Sigmoid colon (tissue), 7 donors: ENCODE measurements at regions of chr5 and their contacts with region 1.

Region 1: DNA sequence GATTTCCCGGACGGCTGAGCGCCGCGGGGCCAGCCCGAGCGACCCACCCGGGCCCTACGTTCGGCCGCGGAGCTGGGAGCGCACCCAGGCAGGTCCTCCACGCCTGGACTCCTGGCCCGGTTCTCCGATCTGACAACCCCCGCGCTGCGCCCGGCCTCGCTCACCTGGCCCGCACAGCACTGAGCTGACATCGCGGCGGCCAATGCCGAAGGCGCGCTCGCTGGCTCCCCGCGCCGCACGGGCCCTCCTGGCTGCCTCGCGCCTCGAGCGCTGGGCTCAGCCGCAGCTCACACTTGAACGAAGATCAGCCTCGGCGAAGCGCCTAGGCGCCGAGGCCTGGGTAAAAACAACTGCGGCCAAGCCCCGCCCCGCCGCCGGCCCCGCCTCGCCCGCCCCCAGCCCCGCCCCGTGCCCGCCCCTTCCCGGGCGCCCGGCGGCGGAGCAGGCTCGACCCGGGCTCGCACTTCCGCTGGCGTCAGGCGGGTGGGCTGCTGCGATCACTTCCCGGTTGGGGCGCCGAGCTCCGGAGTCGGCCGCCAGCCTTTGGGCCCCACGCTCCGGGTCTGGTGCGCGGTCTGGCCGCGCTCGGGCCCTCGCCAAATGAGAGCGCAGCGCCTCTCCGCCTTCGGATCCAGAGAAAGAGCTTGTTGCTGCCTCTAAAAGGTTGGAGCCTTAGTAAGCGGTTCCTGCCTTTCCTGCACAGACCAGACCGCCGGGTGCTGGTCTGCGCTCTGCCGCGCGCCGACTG is at the start of gene SERINC5:
- DNase-seq: peak; percentile 93
- H3K4me3 ChIP-seq: peak within 1 kb of the TSS; percentile 48 to 86 (median 71)
- H3K27ac ChIP-seq: peak within 1 kb of the TSS; percentile 84 to 97 (median 96)
- H3K4me1 ChIP-seq: peaks cover 0 to 48% (median 47%) of the 10 kb centered on the region in 4 donors
- H3K27me3 ChIP-seq: no peaks in the 10 kb centered on the region
- CTCF ChIP-seq: no peak
- EP300 ChIP-seq: peak in 2 of 4 donors; percentile 25 to 32
- POLR2A ChIP-seq: peak; percentile 89 to 93
- total RNA-seq, gene SERINC5: 6.6 to 11.9 (median 9.9) TPM

Region 2: GRCh38 chr5:80109646-80110478 is 146.0 kb before region 1 on chr5:
- intact Hi-C with region 1: loop called (anchors 1 kb)
- DNase-seq: peak; percentile 93
- H3K4me3 ChIP-seq: peak overlapping the region in 3 of 4 donors; percentile 4 to 15 (median 14)
- H3K27ac ChIP-seq: peak overlapping the region in 3 of 4 donors; percentile 77 to 85 (median 77)
- H3K4me1 ChIP-seq: peaks cover 0 to 28% (median 19%) of the 10 kb centered on the region in 4 donors
- H3K27me3 ChIP-seq: no peaks in the 10 kb centered on the region
- CTCF ChIP-seq: no peak
- EP300 ChIP-seq: peak in 2 of 4 donors; percentile 2 to 59
- POLR2A ChIP-seq: no peak

Region 3: DNA sequence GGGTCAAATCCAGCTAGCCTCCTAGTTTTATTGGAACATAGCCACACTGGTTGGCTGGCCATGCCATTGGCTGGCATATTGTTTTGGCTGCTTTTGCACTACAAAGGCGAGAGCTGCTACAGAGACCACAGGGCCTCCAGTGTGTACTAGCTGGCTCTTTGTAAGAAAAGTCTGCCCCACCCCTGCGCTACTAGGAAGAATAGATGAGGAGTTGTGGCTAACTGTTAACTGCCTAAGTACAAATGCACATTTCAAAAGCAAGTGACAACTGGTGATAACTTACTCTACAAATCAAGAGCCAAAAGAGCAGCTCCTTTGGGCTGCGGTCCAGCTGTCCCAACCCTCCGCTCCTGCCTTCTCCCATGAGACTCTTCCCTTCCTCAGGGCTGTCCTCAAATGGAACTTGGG is 63.9 kb before region 1 on chr5:
- intact Hi-C with region 1: loop called (anchors 2 kb)
- DNase-seq: peak; percentile 66
- H3K4me3 ChIP-seq: no peak overlapping the region
- H3K27ac ChIP-seq: peak overlapping the region; percentile 67 to 78 (median 73)
- H3K4me1 ChIP-seq: peaks cover 0 to 57% (median 49%) of the 10 kb centered on the region in 4 donors
- H3K27me3 ChIP-seq: no peaks in the 10 kb centered on the region
- CTCF ChIP-seq: no peak
- EP300 ChIP-seq: no peak
- POLR2A ChIP-seq: no peak

Region 4: DNA sequence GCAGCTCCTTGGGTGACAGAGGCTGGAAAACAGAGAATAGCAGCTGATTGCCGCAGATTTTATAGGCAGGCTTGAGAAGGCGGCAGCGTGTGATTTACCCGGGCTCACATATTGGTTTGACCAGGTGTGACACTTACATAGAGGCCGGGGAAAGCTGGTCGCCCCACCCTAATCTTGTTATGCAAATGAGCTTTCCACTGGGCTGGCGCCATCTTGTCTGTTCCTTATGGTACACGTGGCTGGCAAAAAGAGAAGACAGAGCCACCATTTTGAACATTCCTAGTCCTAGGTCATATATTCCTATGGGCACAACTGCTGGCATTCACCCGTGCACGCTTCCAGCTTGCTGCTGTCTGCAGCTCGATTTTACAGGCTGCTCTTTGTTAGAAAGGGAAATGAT is 52.6 kb after region 1 on chr5:
- intact Hi-C with region 1: loop called (anchors 5 kb)
- DNase-seq: no peak
- H3K4me3 ChIP-seq: no peak overlapping the region
- H3K27ac ChIP-seq: no peak overlapping the region
- H3K4me1 ChIP-seq: no peaks in the 10 kb centered on the region
- H3K27me3 ChIP-seq: no peaks in the 10 kb centered on the region
- CTCF ChIP-seq: no peak
- EP300 ChIP-seq: no peak
- POLR2A ChIP-seq: no peak

Region 5: DNA sequence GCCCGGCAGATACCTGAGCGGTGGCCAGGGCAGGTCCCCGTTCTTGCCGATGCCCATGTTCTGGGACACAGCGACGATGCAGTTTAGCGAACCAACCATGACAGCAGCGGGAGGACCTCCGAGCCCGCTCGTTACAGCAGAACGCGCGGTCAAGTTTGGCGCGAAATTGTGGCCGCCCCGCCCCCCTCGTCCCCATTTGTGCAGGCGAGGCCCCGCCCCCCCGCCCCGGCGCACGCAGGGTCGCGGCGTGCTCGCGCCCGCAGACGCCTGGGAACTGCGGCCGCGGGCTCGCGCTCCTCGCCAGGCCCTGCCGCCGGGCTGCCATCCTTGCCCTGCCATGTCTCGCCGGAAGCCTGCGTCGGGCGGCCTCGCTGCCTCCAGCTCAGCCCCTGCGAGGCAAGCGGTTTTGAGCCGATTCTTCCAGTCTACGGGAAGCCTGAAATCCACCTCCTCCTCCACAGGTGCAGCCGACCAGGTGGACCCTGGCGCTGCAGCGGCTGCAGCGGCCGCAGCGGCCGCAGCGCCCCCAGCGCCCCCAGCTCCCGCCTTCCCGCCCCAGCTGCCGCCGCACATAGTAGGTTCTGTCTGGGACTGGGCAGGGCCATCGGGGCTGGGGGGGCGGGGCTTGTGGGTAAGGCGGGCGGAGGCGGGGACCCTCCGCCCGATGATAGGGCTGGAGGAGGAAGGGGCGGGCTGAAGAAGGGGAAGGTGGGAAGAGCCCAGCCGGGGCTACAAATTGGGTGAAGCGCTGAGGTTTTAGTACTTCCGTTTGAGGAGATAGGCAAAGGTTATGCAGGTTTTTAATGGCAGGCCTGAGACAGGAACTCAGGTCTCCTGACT is 398.7 kb after region 1 on chr5 and contains the starts of genes DHFR and MSH3:
- intact Hi-C with region 1: loop called (anchors 10 kb)
- DNase-seq: peak; percentile 89
- H3K4me3 ChIP-seq: peak within 1 kb of the TSS; percentile 75 to 96 (median 84)
- H3K27ac ChIP-seq: peak within 1 kb of the TSS; percentile 89 to 98 (median 94)
- H3K4me1 ChIP-seq: peaks cover 0 to 18% (median 15%) of the 10 kb centered on the region in 4 donors
- H3K27me3 ChIP-seq: no peaks in the 10 kb centered on the region
- CTCF ChIP-seq: no peak
- EP300 ChIP-seq: no peak
- POLR2A ChIP-seq: peak in 1 of 2 donors; percentile 4
- total RNA-seq, gene DHFR: 5.6 to 9.0 (median 8.4) TPM
- total RNA-seq, gene MSH3: 11.8 to 15.3 (median 13.3) TPM